ENCODE measurements at regions of chr20 and their contacts with region 1.

Region 1: DNA sequence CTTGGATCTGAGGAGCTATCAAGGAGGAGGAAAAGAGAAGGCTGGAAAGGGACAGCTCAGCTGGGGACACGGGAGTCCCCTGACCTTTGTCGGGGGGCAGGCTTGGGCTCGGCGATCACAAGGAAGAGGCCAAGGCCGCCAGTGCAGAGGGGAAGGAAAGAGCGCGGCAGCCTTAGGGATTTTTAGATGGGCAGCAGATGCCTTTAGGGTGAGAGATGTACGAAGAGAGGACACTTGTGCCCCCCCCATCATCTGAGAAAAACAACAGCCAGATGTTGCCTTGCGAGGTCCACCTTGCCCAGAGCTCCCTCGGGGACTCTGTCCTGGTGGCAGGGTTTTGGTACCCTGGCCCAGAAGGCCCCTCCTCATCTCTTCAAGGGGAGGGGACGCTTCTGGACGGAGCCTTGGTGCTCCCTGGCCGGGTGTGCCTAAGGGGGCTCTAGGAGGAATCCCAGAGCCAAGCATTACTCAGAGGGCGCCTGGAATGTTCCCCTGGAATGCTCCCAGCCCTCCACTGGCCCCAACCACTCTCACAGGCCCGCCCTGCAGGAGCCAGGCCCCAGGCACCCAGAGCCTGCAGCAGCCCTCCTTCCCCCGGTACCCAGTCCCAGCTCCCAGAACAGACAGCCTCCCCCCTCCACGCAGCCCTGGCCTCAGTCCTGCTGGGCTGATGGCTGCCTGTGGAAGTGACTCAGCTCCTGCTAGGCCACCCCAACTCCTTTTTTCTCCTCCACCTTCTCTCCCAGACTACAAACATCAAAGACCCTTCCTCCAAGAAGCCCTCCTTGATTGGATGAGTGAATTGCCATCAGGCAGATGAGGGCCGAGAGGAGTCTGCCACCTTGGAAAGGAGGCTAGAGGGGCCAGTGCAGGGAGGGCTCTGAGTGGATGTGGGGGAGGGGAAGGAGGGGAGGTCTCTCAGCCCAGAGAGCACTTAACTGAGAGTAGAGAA is 1.8 kb downstream of the ADAM33 start:
- DNase-seq: no peak
- ATAC-seq: no peak
- H3K4me3 ChIP-seq: peak overlapping the region; percentile 44
- H3K27ac ChIP-seq: peak overlapping the region; percentile 17
- H3K4me1 ChIP-seq: peaks cover 17% of the 10 kb centered on the region
- H3K27me3 ChIP-seq: peaks cover 38% of the 10 kb centered on the region
- CTCF ChIP-seq: no peak

Region 2: GRCh38 chr20:3710703-3711483 is 30.9 kb after region 1 on chr20:
- intact Hi-C with region 1: loop called (anchors 5 kb)
- DNase-seq: peak; percentile 86
- ATAC-seq: peak; percentile 67
- H3K4me3 ChIP-seq: peak overlapping the region; percentile 37
- H3K27ac ChIP-seq: peak overlapping the region; percentile 37
- H3K4me1 ChIP-seq: peaks cover 13% of the 10 kb centered on the region
- H3K27me3 ChIP-seq: no peaks in the 10 kb centered on the region
- CTCF ChIP-seq: peak; percentile 99